ENCODE measurements at regions of chr19 and their contacts with region 1.

Region 1: DNA sequence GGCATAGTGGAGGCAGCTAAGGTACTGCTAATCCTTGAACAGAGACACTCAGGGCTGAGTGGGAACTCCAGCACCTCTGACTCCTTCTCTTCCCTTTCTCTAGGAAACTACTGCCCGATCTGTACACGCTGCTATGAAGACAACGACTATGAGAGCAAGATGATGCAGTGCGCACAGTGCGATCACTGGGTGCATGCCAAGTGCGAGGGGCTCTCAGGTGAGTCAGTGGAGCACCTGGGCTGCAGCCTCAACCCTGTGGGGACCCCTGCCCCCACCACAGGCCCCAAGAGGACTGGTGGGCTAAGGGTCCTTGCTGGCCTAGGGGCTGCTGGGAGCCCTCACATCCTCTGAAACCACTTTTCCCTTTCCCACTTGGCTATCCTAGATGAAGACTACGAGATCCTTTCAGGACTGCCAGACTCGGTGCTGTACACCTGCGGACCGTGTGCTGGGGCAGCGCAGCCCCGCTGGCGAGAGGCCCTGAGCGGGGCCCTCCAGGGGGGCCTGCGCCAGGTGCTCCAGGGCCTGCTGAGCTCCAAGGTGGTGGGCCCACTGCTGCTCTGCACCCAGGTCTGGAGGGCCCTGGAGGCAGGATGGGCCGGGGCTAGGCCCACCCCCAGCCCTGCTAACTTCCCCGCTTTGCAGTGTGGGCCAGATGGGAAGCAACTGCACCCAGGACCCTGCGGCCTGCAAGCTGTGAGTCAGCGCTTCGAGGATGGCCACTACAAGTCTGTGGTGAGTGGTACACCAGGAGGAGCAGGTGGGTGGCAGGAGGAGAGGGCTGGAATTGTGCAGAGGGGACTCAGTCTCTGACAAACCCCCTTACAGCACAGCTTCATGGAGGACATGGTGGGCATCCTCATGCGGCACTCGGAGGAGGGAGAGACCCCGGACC is 9.5 kb downstream of the KMT2B start:
- DNase-seq: no peak
- H3K4me3 ChIP-seq: no peak overlapping the region
- H3K27ac ChIP-seq: no peak overlapping the region
- H3K4me1 ChIP-seq: no peaks in the 10 kb centered on the region
- H3K27me3 ChIP-seq: no peaks in the 10 kb centered on the region
- CTCF ChIP-seq: no peak
- EP300 ChIP-seq: no peak
- RAD21 ChIP-seq: no peak

Region 2: DNA sequence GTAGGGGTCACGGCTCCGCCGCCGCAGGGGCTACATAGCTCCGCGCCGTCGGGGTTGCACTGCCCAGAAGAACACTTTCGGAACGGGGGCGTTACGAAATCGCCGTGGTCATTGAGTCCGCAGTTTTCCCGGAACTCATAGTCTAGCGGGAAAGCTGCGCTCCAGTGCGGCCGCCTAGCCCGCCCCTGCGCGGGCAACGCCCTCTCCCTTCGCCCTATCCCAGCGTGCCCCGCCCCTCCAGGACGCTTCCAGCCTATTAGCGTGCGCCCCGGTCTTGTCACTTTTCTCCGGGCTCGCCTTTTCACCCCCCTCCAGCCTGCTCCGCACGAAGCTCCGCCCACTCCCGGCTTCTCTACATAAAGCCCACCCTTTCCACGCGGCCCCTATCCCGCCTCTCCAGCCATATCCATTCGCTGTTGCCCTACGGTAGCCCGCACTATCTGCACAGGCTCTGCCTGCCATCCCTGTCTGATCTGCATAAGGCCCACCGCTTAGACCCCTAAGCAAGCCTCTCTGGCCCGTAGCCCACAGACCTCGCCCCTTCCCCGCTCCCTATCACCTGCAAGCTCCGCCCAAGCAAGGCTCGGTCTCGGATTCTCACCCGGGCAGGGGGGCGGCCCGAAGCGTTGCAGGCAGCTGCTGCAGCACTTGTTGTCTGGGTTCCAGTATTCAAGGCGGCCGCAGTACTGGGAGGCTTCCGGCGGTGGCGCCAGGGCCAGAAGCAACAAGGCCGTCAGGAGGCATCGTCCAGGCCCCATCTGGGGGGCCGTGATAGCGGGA is 13.3 kb after region 1 on chr19:
- CTCF ChIA-PET with region 1: interaction called, 7 read pairs
- POLR2A ChIA-PET with region 1: interaction called, 10 read pairs
- DNase-seq: peak; percentile 99
- H3K4me3 ChIP-seq: peak overlapping the region; percentile 63 to 88
- H3K27ac ChIP-seq: peak overlapping the region; percentile 63 to 90; a peak in 3 of 4 replicates
- H3K4me1 ChIP-seq: peaks cover 4 to 18% of the 10 kb centered on the region in 2 experiments; a peak in 2 of 4 replicates
- H3K27me3 ChIP-seq: no peaks in the 10 kb centered on the region
- CTCF ChIP-seq: peak; percentile 31; the same call in 1 of the 2 replicates
- EP300 ChIP-seq: 0 out of 4 replicates have a peak, but pooled peaks of 1 of the 2 experiments have one; percentile 3
- RAD21 ChIP-seq: no peak